Heart right ventricle (tissue), 16 donors: ENCODE measurements at regions of chr15 and their contacts with region 1.

Region 1: GRCh38 chr15:41957021-41957897 is 15.1 kb downstream of the EHD4 start:
- DNase-seq: no peak
- ATAC-seq: peak; percentile 25 to 69 (median 44)
- H3K4me3 ChIP-seq: no peak overlapping the region
- H3K27ac ChIP-seq: peak overlapping the region; percentile 51 to 88 (median 76)
- H3K4me1 ChIP-seq: peaks cover 22 to 97% (median 58%) of the 10 kb centered on the region in 9 donors
- H3K27me3 ChIP-seq: no peaks in the 10 kb centered on the region
- CTCF ChIP-seq: no peak

Region 2: DNA sequence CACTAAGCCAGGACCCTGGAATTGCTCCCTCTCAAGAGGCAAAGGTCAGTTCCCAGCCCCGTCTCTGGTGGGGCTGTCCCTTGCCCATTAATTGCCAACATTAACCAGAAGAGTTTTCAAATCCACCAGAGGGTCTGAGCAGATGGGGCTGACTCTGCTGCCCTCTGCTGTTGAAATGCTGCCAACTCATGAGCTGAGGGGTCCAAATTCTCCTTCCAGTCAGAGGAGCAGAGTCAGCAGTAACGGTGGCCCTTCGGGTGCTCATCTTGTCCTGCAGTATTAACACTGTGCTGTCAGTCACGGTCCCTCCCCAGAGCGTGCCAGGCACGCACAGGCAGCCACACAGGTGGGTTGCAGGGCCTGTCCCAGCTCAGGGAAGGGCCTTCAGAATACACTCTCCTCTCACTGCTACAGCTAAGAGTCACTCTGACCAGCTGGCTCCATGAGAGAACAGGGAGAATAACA is 52.7 kb before region 1 on chr15:
- intact Hi-C with region 1: loop called in 1 of 10 experiments (anchors 10 kb)
- DNase-seq: peak in 1 of 2 donors; percentile 70
- ATAC-seq: peak; percentile 56 to 79 (median 69)
- H3K4me3 ChIP-seq: no peak overlapping the region
- H3K27ac ChIP-seq: peak overlapping the region in 9 of 10 donors; percentile 9 to 70 (median 48)
- H3K4me1 ChIP-seq: peaks cover 3 to 50% (median 37%) of the 10 kb centered on the region in 9 donors
- H3K27me3 ChIP-seq: no peaks in the 10 kb centered on the region
- CTCF ChIP-seq: peak; percentile 68 to 88 (median 85)

Region 3: DNA sequence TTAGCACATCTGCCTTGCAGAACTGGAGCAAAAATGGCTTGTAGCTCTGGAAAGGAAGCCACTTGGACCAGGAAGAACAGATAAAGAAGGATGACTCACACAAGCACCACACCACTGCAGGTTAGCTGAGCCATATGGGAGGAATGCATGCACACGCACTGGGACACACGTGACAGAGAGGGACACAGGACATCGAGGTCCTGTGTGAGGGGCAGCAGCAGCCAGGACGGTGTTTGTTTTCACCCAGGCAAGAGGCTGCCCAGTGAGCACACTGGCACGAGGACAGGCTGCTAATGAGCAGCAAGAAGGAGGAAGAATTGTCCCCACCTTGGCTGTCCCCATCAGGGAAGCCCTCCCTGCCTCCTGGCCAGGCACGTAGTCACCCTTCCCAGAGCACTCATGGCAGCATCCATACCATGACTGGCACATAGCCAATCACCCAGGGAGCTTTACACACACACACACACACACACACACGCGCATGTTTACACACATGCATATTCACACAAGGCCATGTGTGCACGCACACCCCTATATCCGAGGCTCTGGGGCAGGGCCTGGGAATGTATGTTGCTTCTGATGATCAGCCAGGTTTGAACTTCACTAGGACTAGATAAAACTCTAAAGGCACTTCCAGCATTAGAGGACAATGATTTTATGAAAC is 39.4 kb before region 1 on chr15:
- intact Hi-C with region 1: loop called in 3 of 10 experiments (anchors 5 to 10 kb)
- DNase-seq: peak; percentile 37 to 47
- ATAC-seq: peak in 6 of 8 donors; percentile 17 to 67 (median 52)
- H3K4me3 ChIP-seq: peak overlapping the region in 1 of 10 donors; percentile 0
- H3K27ac ChIP-seq: peak overlapping the region; percentile 61 to 87 (median 77)
- H3K4me1 ChIP-seq: peaks cover 38 to 100% (median 100%) of the 10 kb centered on the region in 9 donors
- H3K27me3 ChIP-seq: no peaks in the 10 kb centered on the region
- CTCF ChIP-seq: no peak